ENCODE measurements at regions of chr1 and their contacts with region 1.

Region 1: DNA sequence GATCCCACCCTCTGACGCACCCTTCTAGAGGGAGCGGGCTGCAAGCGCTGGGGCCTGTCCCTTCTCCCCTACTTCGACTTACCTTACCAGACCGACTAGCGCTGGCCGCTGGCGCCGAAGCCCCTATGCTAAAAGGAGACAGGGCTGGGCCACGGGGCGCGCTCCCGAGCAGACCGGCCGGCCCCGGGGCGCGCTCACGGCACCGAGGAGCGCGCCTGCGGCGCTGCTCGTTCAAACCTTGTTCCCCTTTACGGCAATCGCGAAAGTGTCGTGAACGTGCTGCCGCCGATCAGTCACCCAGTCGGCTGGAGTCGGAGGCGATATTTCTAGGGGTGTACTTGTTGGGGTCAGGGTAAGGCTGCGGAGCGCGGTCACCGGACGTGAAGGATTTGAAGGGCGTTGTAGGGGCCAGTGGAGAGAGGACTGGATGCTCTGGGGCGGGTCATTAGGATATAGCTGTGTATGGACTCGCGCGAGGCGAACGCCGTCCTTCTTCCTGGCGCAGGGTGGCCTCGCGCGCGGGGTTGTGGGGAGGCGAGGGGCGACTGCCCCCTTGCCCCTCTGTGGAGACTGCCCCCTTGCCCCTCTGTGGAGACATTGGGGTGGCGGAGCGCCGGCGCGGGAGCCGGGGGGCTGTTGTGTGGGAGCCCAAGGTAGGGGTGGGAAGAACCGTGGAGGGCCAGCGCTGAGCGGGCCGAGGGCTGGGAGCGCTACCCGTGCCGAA is at the starts of genes CEPT1 and DRAM2:
- DNase-seq: peak; percentile 90
- ATAC-seq: peak; percentile 78
- H3K4me3 Mint-ChIP-seq: peak within 1 kb of the TSS; percentile 100
- H3K27ac Mint-ChIP-seq: peak within 1 kb of the TSS; percentile 99
- H3K4me1 Mint-ChIP-seq: peaks cover 74% of the 10 kb centered on the region
- H3K27me3 Mint-ChIP-seq: no peaks in the 10 kb centered on the region
- CTCF ChIP-seq: no peak
- total RNA-seq, gene CEPT1: 74.4 and 87.0 TPM in 2 replicates
- total RNA-seq, gene DRAM2: 61.8 and 77.6 TPM in 2 replicates

Region 2: DNA sequence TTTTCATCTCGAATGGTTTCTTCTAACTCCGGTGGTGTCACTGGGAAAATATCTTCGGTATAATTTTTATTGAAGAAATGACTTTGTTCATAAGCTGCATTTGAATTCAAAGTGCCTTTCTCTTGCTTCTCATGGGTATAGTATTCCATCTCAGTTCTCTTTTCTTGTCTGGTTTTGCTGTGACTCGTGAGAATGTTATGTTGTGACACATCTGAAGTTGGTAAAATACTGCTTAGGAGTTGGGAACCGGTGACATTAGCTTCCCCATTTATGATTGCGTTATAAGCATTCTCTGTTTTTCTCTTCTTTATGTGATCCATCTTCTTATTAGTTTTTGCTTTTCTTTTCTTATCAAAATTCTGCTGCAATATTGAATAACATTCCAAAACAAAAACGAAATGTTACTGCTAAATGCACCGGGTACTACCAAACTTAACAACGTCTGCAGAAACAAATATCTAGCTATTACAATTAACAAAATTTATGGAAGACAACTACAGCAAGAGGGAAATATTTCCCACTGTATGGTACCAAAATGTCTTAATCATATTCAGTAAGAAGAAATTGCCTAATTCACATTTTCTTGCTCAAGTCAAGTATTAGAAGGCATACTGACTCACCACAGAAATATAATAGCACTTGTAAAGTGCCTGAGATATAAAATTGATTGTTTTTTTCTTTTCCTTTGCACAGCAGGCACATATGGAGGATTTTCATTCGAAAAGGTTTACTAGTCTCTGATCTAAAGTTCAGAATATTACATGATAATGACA is 191.9 kb before region 1 on chr1:
- CTCF ChIA-PET with region 1: no interaction called
- POLR2A ChIA-PET with region 1: no interaction called
- intact Hi-C with region 1: no loop called
- DNase-seq: no peak
- ATAC-seq: no peak
- H3K4me3 Mint-ChIP-seq: no peak overlapping the region
- H3K27ac Mint-ChIP-seq: no peak overlapping the region
- H3K4me1 Mint-ChIP-seq: no peaks in the 10 kb centered on the region
- H3K27me3 Mint-ChIP-seq: no peaks in the 10 kb centered on the region
- CTCF ChIP-seq: no peak

Region 3: GRCh38 chr1:110963691-110964399 is 176.3 kb before region 1 on chr1 and contains the start of gene LRIF1:
- CTCF ChIA-PET with region 1: interaction called, 3 read pairs
- POLR2A ChIA-PET with region 1: interaction called, 15 read pairs
- intact Hi-C with region 1: no loop called
- DNase-seq: peak; percentile 99
- ATAC-seq: peak; percentile 97
- H3K4me3 Mint-ChIP-seq: peak within 1 kb of the TSS; percentile 84
- H3K27ac Mint-ChIP-seq: peak within 1 kb of the TSS; percentile 91
- H3K4me1 Mint-ChIP-seq: peaks cover 38% of the 10 kb centered on the region
- H3K27me3 Mint-ChIP-seq: peaks cover 10% of the 10 kb centered on the region
- CTCF ChIP-seq: no peak
- total RNA-seq, gene LRIF1: 16.7 and 17.0 TPM in 2 replicates

Region 4: DNA sequence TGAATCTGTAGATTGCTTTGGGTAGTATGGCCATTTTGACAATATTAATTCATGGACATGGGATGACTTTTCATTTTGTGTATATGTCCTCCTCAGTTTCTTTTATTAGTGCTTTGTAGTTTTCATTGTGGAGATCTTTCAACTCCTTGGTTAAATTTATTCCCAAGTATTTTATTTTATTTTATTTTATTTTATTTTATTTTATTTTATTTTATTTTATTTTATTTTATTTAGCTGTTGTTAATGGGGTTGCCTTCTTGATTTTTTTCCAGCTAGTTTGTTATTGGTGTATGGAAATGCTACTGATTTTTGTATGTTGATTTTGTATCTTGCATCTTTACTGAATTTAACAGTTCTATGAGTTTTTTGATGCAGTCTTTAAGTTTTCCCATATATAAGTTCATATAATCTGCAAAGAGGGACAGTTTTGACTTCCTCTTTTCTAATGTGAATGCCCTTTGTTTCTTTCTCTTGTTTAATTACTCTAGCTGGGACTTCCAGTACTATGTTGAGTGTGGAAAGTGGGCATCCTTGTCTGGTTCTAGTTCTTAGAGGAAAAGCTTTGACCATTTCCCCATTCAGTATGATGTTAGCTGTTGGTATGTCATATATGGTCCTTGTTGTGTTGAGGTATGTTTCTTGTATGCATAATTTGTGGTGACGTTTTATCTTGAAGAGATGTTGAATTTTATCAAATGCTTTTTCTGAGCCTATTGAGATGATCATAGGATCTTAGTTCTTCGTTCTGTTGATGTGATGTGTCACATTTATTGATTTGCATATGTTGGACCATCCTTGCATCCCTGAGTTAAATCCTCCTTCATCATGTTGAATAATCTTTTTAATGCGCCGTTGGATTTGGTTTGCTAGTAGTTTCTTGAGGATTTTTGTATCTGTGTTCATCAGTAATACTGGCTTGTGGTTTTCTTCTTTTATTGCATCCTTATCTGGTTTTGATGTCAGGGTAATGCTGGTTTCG is 14.2 kb after region 1 on chr1:
- CTCF ChIA-PET with region 1: no interaction called
- POLR2A ChIA-PET with region 1: interaction called, 39 read pairs
- intact Hi-C with region 1: loop called (anchors 1 kb)
- DNase-seq: no peak
- ATAC-seq: no peak
- H3K4me3 Mint-ChIP-seq: peak overlapping the region; percentile 29
- H3K27ac Mint-ChIP-seq: peak overlapping the region; percentile 77
- H3K4me1 Mint-ChIP-seq: peaks cover 76% of the 10 kb centered on the region
- H3K27me3 Mint-ChIP-seq: no peaks in the 10 kb centered on the region
- CTCF ChIP-seq: no peak

Region 5: GRCh38 chr1:111197598-111198284 is 57.6 kb after region 1 on chr1:
- CTCF ChIA-PET with region 1: no interaction called
- POLR2A ChIA-PET with region 1: interaction called, 20 read pairs
- intact Hi-C with region 1: no loop called
- DNase-seq: no peak
- ATAC-seq: peak; percentile 45
- H3K4me3 Mint-ChIP-seq: no peak overlapping the region
- H3K27ac Mint-ChIP-seq: peak overlapping the region; percentile 68
- H3K4me1 Mint-ChIP-seq: peaks cover 97% of the 10 kb centered on the region
- H3K27me3 Mint-ChIP-seq: no peaks in the 10 kb centered on the region
- CTCF ChIP-seq: no peak

Region 6: DNA sequence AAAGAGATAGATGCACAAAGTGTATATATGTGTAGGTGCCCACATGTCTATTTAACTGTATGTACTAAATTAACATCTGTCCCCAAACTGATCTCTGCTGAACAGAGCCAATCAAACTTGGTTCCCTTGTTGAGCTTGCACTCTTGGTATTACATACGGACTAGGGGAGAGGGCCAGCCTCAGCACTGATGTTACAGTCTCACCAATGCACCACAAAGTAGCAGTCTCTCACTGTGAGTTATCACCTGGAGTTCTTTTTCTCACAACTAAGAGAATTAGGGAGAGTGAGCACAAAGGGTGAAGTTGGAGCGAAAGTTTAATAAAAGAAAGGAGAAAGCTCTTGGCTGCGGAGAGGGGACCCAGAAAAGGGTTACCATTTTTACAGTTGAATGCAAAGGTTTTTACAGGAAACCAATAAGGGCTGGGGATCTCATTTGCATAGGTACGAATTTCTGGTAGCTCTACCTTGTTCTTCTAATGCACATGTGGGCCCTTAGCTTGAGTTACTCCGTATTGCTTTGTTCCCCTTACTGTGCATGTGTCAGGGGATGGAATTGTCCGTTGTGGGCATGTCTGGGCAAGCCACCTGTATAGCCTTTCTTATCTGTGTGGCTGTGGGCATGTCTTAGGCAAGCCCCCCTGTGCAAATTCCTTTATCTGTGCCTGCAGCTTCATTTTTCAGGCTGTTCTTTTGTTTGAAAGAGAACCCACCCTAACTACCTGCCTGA is 74.1 kb after region 1 on chr1:
- CTCF ChIA-PET with region 1: interaction called, 4 read pairs
- POLR2A ChIA-PET with region 1: interaction called, 38 read pairs
- intact Hi-C with region 1: loop called (anchors 2 kb)
- DNase-seq: no peak
- ATAC-seq: no peak
- H3K4me3 Mint-ChIP-seq: peak overlapping the region; percentile 42
- H3K27ac Mint-ChIP-seq: peak overlapping the region; percentile 95
- H3K4me1 Mint-ChIP-seq: peaks cover 76% of the 10 kb centered on the region
- H3K27me3 Mint-ChIP-seq: no peaks in the 10 kb centered on the region
- CTCF ChIP-seq: no peak

Region 7: GRCh38 chr1:111619635-111620440 is 479.7 kb after region 1 on chr1 and contains the start of gene RAP1A:
- CTCF ChIA-PET with region 1: no interaction called
- POLR2A ChIA-PET with region 1: interaction called, 4 read pairs
- intact Hi-C with region 1: loop called (anchors 10 kb)
- DNase-seq: peak; percentile 88
- ATAC-seq: peak; percentile 77
- H3K4me3 Mint-ChIP-seq: peak within 1 kb of the TSS; percentile 95
- H3K27ac Mint-ChIP-seq: peak within 1 kb of the TSS; percentile 93
- H3K4me1 Mint-ChIP-seq: peaks cover 82% of the 10 kb centered on the region
- H3K27me3 Mint-ChIP-seq: no peaks in the 10 kb centered on the region
- CTCF ChIP-seq: no peak
- total RNA-seq, gene RAP1A: 92.4 and 93.8 TPM in 2 replicates

Measured in activated B cell treated with CpG ODN at 0.5 μM for 24 hours (primary cell).